Pancreas (tissue), 10 donors: ENCODE measurements at regions of chr3 and their contacts with region 1.

Region 1: DNA sequence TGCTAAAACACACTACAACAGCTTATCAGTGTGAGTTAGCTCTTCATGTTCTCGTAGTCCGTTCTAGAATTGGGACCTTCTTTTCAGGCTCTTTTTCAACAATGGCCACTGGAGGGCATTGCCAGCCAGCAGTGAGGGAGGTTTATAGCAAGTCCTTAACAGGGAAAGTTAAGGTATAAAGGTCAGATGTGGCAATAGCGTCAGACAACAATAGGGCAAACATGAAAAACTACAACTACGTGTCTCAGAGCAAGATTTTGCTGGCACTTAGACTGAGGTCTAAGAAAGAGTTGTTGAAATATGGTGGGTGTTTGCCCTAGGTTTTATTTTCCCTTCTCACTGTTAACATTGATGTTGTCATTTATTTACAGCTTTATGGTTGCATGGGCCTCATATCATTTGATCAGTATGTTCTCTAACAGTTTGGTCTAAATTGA is 161.4 kb downstream of the GMNC start:
- DNase-seq: peak; percentile 48 to 70 (median 58)
- ATAC-seq: peak; percentile 93 to 98 (median 96)
- H3K4me3 ChIP-seq: no peak overlapping the region
- H3K27ac ChIP-seq: no peak overlapping the region
- H3K4me1 ChIP-seq: peaks cover 0 to 8% (median 0%) of the 10 kb centered on the region in 3 donors
- H3K27me3 ChIP-seq: no peaks in the 10 kb centered on the region
- CTCF ChIP-seq: peak; percentile 20 to 55 (median 36)

Region 2: GRCh38 chr3:190585805-190586630 is 115.1 kb before region 1 on chr3:
- intact Hi-C with region 1: no loop called
- DNase-seq: no peak
- ATAC-seq: peak in 3 of 4 donors; percentile 51 to 81 (median 77)
- H3K4me3 ChIP-seq: no peak overlapping the region
- H3K27ac ChIP-seq: no peak overlapping the region
- H3K4me1 ChIP-seq: peaks cover 2 to 3% (median 2%) of the 10 kb centered on the region in 3 donors
- H3K27me3 ChIP-seq: no peaks in the 10 kb centered on the region
- CTCF ChIP-seq: no peak

Region 3: GRCh38 chr3:190747571-190747970 is 46.5 kb after region 1 on chr3:
- intact Hi-C with region 1: no loop called
- DNase-seq: no peak
- ATAC-seq: no peak
- H3K4me3 ChIP-seq: no peak overlapping the region
- H3K27ac ChIP-seq: no peak overlapping the region
- H3K4me1 ChIP-seq: no peaks in the 10 kb centered on the region
- H3K27me3 ChIP-seq: no peaks in the 10 kb centered on the region
- CTCF ChIP-seq: no peak

Region 4: DNA sequence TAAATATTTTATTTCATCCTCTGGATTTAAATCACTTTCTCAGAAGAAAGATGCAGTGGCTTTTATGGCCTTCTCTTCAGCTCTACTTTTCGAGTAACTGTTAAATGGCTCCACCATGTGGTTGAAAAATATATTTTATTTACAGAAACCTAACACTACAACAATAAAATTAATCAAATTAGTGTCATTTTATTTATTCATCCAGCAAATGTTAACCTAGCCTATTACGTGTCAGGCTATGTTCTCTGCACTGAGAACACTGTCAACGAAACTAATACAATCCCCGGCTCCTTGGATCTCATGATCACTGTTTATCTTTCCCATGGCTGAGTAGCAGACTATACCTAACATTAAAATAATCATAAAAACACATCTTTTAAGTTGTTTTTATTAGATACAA is 349.9 kb after region 1 on chr3:
- intact Hi-C with region 1: loop called in 1 of 3 experiments (anchors 5 kb)
- DNase-seq: no peak
- ATAC-seq: peak in 3 of 4 donors; percentile 50 to 75 (median 68)
- H3K4me3 ChIP-seq: no peak overlapping the region
- H3K27ac ChIP-seq: no peak overlapping the region
- H3K4me1 ChIP-seq: no peaks in the 10 kb centered on the region
- H3K27me3 ChIP-seq: no peaks in the 10 kb centered on the region
- CTCF ChIP-seq: peak in 3 of 4 donors; percentile 15 to 33 (median 30)